ENCODE measurements at regions of chr6 and their contacts with region 1.

Region 1: DNA sequence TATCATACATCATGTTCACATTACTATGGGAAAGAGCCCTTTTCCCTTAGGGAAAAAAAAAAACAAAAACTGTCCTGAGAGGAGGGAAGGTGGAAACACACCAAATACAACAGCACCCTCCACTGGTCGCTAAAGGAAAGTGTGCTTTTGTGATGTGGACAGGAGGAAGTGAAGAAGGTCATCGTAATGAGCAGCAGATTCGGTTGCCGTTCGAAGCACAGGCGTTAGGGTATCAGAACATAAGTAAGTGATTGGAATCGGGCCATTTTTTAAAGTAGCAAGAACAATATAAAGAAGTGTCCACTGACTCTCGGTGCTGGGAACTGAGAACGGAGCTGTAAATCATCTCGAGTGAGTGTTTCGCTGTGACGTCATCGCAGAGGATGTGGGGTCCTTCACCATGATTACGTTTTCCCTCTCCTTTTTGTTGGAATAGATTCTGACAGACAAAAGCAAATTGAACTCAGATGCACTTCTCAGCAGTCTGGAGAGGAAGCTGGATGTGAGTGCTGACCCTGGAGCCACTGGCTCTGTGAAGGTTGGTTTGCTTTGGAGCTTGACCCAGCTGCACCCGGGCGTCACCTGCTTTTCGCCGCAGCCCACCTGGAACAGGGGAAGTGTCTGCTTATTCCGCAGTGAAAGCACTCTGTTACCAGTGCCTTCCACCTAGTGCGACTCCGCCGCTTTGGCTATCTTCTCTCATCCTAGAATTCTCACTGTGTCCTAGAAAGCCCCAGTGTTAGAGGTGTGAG is 203.6 kb upstream of the GMDS start:
- DNase-seq: peak in 2 of 9 experiments; percentile 37 to 47
- ATAC-seq: no peak
- H3K4me3 ChIP-seq: no peak overlapping the region
- H3K4me3 Mint-ChIP-seq: peak overlapping the region; percentile 60
- H3K27ac ChIP-seq: no peak overlapping the region
- H3K27ac Mint-ChIP-seq: no peak overlapping the region
- H3K4me1 ChIP-seq: no peaks in the 10 kb centered on the region
- H3K4me1 Mint-ChIP-seq: peaks cover 5% of the 10 kb centered on the region
- H3K27me3 ChIP-seq: no peaks in the 10 kb centered on the region
- H3K27me3 Mint-ChIP-seq: no peaks in the 10 kb centered on the region
- CTCF ChIP-seq: no peak

Region 2: DNA sequence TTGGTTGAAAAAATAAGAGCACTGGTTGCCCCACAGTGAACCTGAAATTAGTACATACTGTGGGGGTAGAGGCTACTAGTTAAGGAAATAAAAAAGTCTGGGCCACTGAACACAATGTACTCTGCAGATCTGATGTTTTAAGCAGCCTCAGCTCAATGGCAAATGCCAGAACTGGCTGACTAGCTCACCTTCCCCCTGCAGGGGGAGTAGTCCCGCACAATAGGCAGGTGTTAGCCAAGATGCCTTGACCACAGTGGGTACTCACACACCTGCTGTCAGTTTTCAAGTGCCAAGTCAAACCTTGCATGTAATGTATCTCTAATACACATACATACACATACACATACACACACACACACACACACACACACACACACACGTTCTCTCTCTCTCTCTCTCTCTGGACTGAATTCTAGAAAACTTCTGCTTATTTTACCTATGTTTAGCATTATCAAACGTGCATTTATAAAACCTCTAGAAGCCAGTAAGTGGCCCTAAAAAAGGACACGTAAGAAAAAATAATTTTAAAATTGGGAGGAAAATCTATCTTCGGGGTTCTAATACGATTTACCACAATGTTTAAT is 239.7 kb before region 1 on chr6:
- CTCF ChIA-PET with region 1: interaction called, 3 read pairs
- POLR2A ChIA-PET with region 1: no interaction called
- intact Hi-C with region 1: loop called in 1 of 2 experiments (anchors 10 kb)
- DNase-seq: peak in 4 of 9 experiments; percentile 18 to 51 (median 35)
- ATAC-seq: no peak
- H3K4me3 ChIP-seq: no peak overlapping the region
- H3K4me3 Mint-ChIP-seq: no peak overlapping the region
- H3K27ac ChIP-seq: no peak overlapping the region
- H3K27ac Mint-ChIP-seq: no peak overlapping the region
- H3K4me1 ChIP-seq: no peaks in the 10 kb centered on the region
- H3K4me1 Mint-ChIP-seq: peaks cover 3% of the 10 kb centered on the region
- H3K27me3 ChIP-seq: no peaks in the 10 kb centered on the region
- H3K27me3 Mint-ChIP-seq: no peaks in the 10 kb centered on the region
- CTCF ChIP-seq: no peak

Region 3: DNA sequence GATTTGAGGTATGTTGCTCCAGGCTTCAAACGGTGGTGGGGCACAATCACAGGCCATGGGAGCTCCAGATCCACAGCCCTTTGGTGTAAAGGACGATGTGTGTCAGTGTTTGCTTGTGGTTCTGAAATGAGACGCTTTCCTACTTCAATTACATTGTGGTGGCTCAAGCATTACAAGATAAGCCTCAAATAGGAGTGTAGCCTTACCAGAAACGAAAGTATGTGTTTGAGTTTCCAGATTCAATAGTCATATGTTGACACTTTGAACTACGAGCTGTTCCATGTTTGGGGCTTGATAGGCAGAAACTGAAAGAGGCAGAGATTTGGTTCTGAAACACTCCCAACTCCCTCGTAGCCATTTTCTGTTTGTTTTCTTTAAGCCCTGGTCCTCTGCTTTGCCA is 114.6 kb after region 1 on chr6:
- CTCF ChIA-PET with region 1: no interaction called
- POLR2A ChIA-PET with region 1: no interaction called
- intact Hi-C with region 1: no loop called
- DNase-seq: no peak
- ATAC-seq: no peak
- H3K4me3 ChIP-seq: no peak overlapping the region
- H3K4me3 Mint-ChIP-seq: no peak overlapping the region
- H3K27ac ChIP-seq: no peak overlapping the region
- H3K27ac Mint-ChIP-seq: no peak overlapping the region
- H3K4me1 ChIP-seq: no peaks in the 10 kb centered on the region
- H3K4me1 Mint-ChIP-seq: peaks cover 2% of the 10 kb centered on the region
- H3K27me3 ChIP-seq: no peaks in the 10 kb centered on the region
- H3K27me3 Mint-ChIP-seq: peaks cover 14% of the 10 kb centered on the region
- CTCF ChIP-seq: no peak